ENCODE measurements at regions of chr20 and their contacts with region 1.

Region 1: GRCh38 chr20:49620364-49621240 is 52.7 kb upstream of the PTGIS start:
- DNase-seq: no peak
- H3K4me3 ChIP-seq: no peak overlapping the region
- H3K27ac ChIP-seq: no peak overlapping the region
- H3K4me1 ChIP-seq: no peaks in the 10 kb centered on the region
- H3K27me3 ChIP-seq: no peaks in the 10 kb centered on the region
- CTCF ChIP-seq: no peak

Region 2: DNA sequence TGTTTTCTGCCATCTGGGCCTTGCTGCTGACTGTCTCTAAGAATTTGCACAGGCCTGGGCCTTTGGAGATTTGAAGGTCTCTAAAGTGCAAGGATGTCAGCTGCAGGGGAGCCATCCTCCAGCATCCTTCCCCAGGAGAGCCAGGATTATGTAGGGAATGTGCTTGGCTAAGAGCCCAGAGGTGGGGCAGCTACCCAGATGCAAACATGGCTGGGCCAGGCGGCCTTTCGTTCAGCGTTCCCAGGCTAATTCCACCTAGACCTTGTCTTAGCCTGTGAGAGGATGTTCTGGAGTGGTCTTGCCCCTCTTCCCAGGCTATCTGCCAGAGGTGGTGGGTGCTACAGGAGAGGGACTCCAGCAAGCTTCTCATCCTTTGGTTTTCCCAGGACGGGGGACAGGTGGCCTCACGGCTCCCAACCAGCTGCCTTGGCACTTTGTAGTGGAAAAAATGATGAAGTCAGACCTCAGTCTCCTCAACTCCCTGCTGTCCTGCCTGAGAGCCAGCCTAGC is 45.0 kb before region 1 on chr20:
- CTCF ChIA-PET with region 1: no interaction called
- dilution Hi-C with region 1: loop called (anchors 5 kb)
- in situ Hi-C with region 1: no loop called
- intact Hi-C with region 1: no loop called
- DNase-seq: no peak
- H3K4me3 ChIP-seq: no peak overlapping the region
- H3K27ac ChIP-seq: no peak overlapping the region
- H3K4me1 ChIP-seq: no peaks in the 10 kb centered on the region
- H3K27me3 ChIP-seq: no peaks in the 10 kb centered on the region
- CTCF ChIP-seq: no peak

Region 3: GRCh38 chr20:49724408-49725223 is 104.0 kb after region 1 on chr20:
- CTCF ChIA-PET with region 1: no interaction called
- dilution Hi-C with region 1: loop called (anchors 5 kb)
- in situ Hi-C with region 1: no loop called
- intact Hi-C with region 1: no loop called
- DNase-seq: peak; percentile 14
- H3K4me3 ChIP-seq: no peak overlapping the region
- H3K27ac ChIP-seq: no peak overlapping the region
- H3K4me1 ChIP-seq: no peaks in the 10 kb centered on the region
- H3K27me3 ChIP-seq: no peaks in the 10 kb centered on the region
- CTCF ChIP-seq: no peak

Region 4: GRCh38 chr20:49785852-49786175 is 165.2 kb after region 1 on chr20:
- CTCF ChIA-PET with region 1: no interaction called
- dilution Hi-C with region 1: loop called (anchors 10 kb)
- in situ Hi-C with region 1: no loop called
- intact Hi-C with region 1: no loop called
- DNase-seq: no peak
- H3K4me3 ChIP-seq: no peak overlapping the region
- H3K27ac ChIP-seq: no peak overlapping the region
- H3K4me1 ChIP-seq: no peaks in the 10 kb centered on the region
- H3K27me3 ChIP-seq: no peaks in the 10 kb centered on the region
- CTCF ChIP-seq: no peak

Region 5: DNA sequence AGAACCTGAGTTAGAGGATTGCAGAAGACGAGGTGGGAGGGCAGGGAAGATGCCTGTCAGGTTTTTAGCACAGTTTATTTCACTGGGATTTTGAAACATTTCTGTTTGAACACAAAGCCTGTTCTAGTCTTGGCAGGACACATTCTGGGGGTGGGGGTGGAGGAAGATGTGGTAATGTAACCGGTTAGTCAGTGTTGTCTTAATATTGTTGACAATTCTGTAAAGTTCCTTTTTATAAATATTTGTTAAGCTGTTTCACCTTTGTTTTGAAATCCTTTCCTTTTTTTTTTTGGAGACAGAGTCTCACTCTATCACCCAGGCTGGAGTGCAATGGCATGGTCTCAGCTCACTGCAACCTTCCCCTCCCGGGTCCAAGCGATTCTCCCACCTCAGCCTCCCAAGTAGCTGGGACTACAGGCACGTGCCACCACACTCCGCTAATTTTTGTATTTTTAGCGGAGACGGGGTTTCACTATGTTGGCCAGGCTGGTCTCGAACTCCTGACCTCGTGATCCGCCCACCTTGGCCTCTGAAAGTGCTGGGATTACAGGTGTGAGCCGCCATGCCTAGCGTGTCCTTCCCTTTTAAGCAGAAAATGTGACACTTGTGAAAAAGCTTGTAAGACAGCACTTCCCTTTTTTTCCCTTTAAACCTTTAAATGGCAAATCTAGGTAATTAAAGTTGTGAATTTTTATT is 212.2 kb after region 1 on chr20:
- CTCF ChIA-PET with region 1: no interaction called
- dilution Hi-C with region 1: loop called (anchors 5 kb)
- in situ Hi-C with region 1: no loop called
- intact Hi-C with region 1: no loop called
- DNase-seq: peak; percentile 44
- H3K4me3 ChIP-seq: no peak overlapping the region
- H3K27ac ChIP-seq: no peak overlapping the region
- H3K4me1 ChIP-seq: peaks cover 14% of the 10 kb centered on the region
- H3K27me3 ChIP-seq: no peaks in the 10 kb centered on the region
- CTCF ChIP-seq: no peak

Region 6: DNA sequence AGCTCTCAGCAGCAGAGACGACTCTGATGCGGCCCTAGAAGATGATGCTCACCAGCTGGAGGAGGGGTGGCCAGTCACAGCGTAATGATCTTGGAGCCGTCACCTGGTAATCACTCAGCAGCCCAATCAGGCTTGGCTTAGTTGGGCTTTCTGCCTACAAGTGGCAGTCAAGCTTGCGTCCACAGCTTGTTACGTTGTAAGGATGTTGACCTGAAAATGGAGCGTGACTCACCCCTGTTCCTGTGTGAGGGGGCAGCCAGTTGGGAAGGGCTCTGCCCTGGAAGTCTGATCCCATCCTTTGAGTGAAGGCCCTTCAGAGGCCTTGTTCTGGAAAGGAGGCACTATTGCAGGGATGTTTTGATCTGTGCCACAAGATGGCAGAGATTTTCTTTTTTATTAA is 245.0 kb after region 1 on chr20:
- CTCF ChIA-PET with region 1: no interaction called
- dilution Hi-C with region 1: loop called (anchors 10 kb)
- in situ Hi-C with region 1: loop called in 1 of 2 experiments (anchors 25 kb)
- intact Hi-C with region 1: no loop called
- DNase-seq: no peak
- H3K4me3 ChIP-seq: no peak overlapping the region
- H3K27ac ChIP-seq: no peak overlapping the region
- H3K4me1 ChIP-seq: no peaks in the 10 kb centered on the region
- H3K27me3 ChIP-seq: no peaks in the 10 kb centered on the region
- CTCF ChIP-seq: no peak

Region 7: DNA sequence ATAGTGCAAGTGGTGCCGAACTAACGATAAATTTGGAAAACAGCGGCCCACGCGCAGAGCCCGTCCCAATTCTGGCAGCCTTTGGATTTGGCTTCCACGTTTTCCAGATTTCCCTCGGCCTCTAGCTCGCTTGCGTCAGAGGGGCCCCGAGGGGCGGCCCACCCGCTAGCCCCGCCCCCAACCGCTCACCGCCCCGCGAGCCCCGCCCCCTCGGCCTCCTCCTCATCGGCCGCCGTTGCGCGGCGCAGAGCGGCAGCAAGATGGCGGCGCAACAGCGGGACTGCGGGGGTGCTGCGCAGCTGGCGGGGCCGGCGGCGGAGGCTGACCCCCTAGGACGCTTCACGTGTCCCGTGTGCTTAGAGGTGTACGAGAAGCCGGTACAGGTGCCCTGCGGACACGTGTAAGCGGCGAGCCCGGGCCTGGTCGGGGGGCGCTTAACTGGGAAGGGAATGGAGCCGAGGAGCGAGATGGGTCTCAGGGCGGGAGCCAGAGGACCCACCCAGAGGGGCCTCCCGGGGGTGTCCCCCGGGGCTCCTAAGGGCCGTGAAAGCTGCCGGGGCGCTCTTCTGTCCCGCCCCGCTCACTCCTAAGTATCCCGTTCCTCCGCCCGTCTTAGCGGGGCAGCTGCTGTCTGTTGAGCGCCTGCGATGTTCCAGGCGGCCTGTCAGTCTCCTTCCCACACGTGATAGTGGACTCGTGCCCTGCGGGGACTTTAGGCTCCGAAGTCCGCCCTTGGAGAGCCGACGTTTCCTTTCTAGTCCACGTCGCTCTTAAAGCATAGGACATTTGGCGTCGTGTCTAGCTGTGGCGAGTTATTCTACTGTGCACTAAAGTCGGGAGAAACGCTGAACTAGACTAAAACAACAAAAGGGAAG is 315.8 kb after region 1 on chr20 and contains the start of gene RNF114:
- CTCF ChIA-PET with region 1: no interaction called
- dilution Hi-C with region 1: no loop called
- in situ Hi-C with region 1: no loop called
- intact Hi-C with region 1: no loop called
- DNase-seq: peak; percentile 82
- H3K4me3 ChIP-seq: peak within 1 kb of the TSS; percentile 43 to 97 (median 64)
- H3K27ac ChIP-seq: peak within 1 kb of the TSS; percentile 61
- H3K4me1 ChIP-seq: peaks cover 26% of the 10 kb centered on the region
- H3K27me3 ChIP-seq: no peaks in the 10 kb centered on the region
- CTCF ChIP-seq: no peak
- total RNA-seq, gene RNF114: 57.3 to 136 TPM